MCF 10A (cell line): ENCODE measurements at regions of chr12 and their contacts with region 1.

Region 1: GRCh38 chr12:87953256-87953860 is 75.8 kb downstream of the C12orf50 start:
- DNase-seq: peak; percentile 62
- H3K4me3 Mint-ChIP-seq: no peak overlapping the region
- H3K27ac Mint-ChIP-seq: peak overlapping the region; percentile 52
- H3K4me1 Mint-ChIP-seq: peaks cover 5% of the 10 kb centered on the region
- H3K27me3 Mint-ChIP-seq: no peaks in the 10 kb centered on the region
- CTCF ChIP-seq: peak; percentile 61

Region 2: GRCh38 chr12:85951823-85952222 is 2001.5 kb before region 1 on chr12:
- CTCF ChIA-PET with region 1: interaction called, 3 read pairs
- POLR2A ChIA-PET with region 1: no interaction called
- intact Hi-C with region 1: loop called (anchors 2 kb)
- DNase-seq: peak; percentile 24
- H3K4me3 Mint-ChIP-seq: no peak overlapping the region
- H3K27ac Mint-ChIP-seq: no peak overlapping the region
- H3K4me1 Mint-ChIP-seq: no peaks in the 10 kb centered on the region
- H3K27me3 Mint-ChIP-seq: no peaks in the 10 kb centered on the region
- CTCF ChIP-seq: peak; percentile 55

Region 3: GRCh38 chr12:86735851-86736250 is 1217.5 kb before region 1 on chr12:
- CTCF ChIA-PET with region 1: interaction called, 3 read pairs
- POLR2A ChIA-PET with region 1: no interaction called
- intact Hi-C with region 1: loop called (anchors 10 kb)
- DNase-seq: no peak
- H3K4me3 Mint-ChIP-seq: no peak overlapping the region
- H3K27ac Mint-ChIP-seq: no peak overlapping the region
- H3K4me1 Mint-ChIP-seq: no peaks in the 10 kb centered on the region
- H3K27me3 Mint-ChIP-seq: no peaks in the 10 kb centered on the region
- CTCF ChIP-seq: no peak

Region 4: GRCh38 chr12:87344699-87345098 is 608.7 kb before region 1 on chr12:
- CTCF ChIA-PET with region 1: interaction called, 3 read pairs
- POLR2A ChIA-PET with region 1: no interaction called
- intact Hi-C with region 1: loop called (anchors 10 kb)
- DNase-seq: peak; percentile 2
- H3K4me3 Mint-ChIP-seq: no peak overlapping the region
- H3K27ac Mint-ChIP-seq: no peak overlapping the region
- H3K4me1 Mint-ChIP-seq: peaks cover 6% of the 10 kb centered on the region
- H3K27me3 Mint-ChIP-seq: no peaks in the 10 kb centered on the region
- CTCF ChIP-seq: no peak

Region 5: DNA sequence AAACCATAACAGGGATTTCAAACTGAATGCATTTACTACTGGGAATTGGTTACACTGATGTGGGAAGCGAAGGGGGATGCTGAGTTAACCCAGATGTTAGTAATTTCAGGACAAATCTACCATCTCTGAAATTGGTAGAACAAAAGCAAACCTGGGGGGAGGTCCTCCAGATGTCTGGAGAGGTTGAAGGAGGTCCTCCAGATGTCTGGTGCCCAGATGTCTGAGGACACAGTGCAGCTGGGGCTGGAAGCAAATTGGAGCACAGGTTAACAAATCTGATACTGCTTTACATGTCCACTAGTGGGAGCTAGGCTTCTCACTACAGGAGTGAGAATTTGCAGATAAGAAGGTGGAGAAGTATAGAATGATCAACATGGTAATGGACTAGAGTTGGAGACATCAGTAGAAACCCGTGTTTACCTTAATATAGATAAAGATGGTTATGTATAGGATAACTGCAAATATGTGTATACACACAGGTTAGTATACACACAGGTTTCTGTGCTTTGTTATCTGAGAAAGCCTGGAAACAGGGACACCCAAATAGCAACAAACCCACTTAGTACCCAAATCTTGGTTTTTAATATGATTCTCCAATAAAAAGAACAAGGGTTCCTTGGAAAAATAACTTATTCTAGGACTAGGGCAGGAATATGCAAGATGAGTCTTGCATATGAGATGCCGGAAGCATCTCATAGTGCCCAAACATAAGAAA is 86.6 kb before region 1 on chr12:
- CTCF ChIA-PET with region 1: interaction called, 7 read pairs
- POLR2A ChIA-PET with region 1: no interaction called
- intact Hi-C with region 1: loop called (anchors 1 kb)
- DNase-seq: peak; percentile 38
- H3K4me3 Mint-ChIP-seq: no peak overlapping the region
- H3K27ac Mint-ChIP-seq: no peak overlapping the region
- H3K4me1 Mint-ChIP-seq: peaks cover 8% of the 10 kb centered on the region
- H3K27me3 Mint-ChIP-seq: no peaks in the 10 kb centered on the region
- CTCF ChIP-seq: peak; percentile 34

Region 6: DNA sequence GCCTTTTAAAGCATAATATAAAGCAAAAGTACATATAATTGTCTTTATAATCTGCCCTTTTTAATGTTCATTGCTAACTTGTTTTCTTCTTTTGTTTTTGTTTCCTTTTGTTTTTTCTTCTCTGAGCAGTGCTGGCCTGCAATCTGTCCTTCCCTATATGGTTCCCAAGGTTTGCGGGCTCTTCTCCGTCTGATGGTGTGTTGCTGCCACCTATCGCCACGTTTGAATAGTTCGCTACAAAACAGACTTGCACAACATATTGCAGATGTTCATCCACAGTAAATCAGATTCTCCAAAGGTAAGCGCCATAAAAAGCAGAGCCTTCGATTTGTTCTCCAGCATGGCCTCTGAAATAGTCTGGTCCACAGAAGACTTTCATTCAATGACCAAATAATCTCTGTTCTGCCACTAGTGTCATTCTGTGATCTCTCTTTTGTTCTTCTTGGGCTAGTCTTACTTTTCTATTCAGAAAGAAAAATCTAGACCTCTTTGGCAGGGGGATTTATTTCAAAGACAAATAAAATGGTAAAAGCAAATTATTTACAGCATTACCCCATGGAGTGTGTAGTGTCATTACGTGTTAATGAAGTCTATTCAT is 42.3 kb after region 1 on chr12:
- CTCF ChIA-PET with region 1: interaction called, 4 read pairs
- POLR2A ChIA-PET with region 1: no interaction called
- intact Hi-C with region 1: loop called (anchors 5 kb)
- DNase-seq: peak; percentile 82
- H3K4me3 Mint-ChIP-seq: no peak overlapping the region
- H3K27ac Mint-ChIP-seq: no peak overlapping the region
- H3K4me1 Mint-ChIP-seq: peaks cover 8% of the 10 kb centered on the region
- H3K27me3 Mint-ChIP-seq: no peaks in the 10 kb centered on the region
- CTCF ChIP-seq: peak; percentile 78

Region 7: DNA sequence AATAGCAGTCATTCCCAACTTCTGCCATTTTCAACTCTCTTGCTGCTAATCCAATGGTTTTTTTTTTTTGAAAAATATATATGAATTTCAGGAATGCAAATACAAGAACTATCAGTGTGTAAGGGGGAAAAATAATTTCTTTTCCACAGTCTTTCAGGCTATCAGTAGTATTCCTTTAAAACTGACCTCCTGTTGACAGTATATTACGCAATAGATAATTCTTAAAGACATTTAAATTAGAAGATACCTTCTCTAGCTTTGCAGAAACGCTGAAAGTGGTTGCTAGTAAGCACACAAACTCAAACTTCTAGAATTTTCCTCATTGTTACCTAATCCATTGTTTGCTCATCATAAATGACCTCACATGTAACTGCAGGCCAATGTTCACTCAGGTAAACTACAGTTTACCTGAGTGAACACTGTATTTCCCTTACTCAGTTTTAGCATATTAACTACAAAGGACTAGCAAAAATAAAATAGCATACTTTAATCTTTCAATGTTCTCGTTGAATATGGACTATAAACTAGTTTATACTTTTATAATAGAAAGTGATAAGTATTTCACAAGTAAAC is 75.8 kb after region 1 on chr12 and contains the start of gene C12orf50:
- CTCF ChIA-PET with region 1: no interaction called
- POLR2A ChIA-PET with region 1: no interaction called
- intact Hi-C with region 1: no loop called
- DNase-seq: no peak
- H3K4me3 Mint-ChIP-seq: no peak within 1 kb of the TSS
- H3K27ac Mint-ChIP-seq: no peak within 1 kb of the TSS
- H3K4me1 Mint-ChIP-seq: no peaks in the 10 kb centered on the region
- H3K27me3 Mint-ChIP-seq: no peaks in the 10 kb centered on the region
- CTCF ChIP-seq: no peak
- total RNA-seq, gene C12orf50: 0.29 TPM in 1 of 2 replicates, not detected in the other